Aorta (tissue), 5 donors: ENCODE measurements at regions of chr7 and their contacts with region 1.

Region 1: GRCh38 chr7:93678185-93678584 is 103.7 kb upstream of the CALCR start:
- DNase-seq: no peak
- ATAC-seq: no peak
- H3K4me3 ChIP-seq: no peak overlapping the region
- H3K27ac ChIP-seq: no peak overlapping the region
- H3K4me1 ChIP-seq: no peaks in the 10 kb centered on the region
- H3K27me3 ChIP-seq: no peaks in the 10 kb centered on the region

Region 2: DNA sequence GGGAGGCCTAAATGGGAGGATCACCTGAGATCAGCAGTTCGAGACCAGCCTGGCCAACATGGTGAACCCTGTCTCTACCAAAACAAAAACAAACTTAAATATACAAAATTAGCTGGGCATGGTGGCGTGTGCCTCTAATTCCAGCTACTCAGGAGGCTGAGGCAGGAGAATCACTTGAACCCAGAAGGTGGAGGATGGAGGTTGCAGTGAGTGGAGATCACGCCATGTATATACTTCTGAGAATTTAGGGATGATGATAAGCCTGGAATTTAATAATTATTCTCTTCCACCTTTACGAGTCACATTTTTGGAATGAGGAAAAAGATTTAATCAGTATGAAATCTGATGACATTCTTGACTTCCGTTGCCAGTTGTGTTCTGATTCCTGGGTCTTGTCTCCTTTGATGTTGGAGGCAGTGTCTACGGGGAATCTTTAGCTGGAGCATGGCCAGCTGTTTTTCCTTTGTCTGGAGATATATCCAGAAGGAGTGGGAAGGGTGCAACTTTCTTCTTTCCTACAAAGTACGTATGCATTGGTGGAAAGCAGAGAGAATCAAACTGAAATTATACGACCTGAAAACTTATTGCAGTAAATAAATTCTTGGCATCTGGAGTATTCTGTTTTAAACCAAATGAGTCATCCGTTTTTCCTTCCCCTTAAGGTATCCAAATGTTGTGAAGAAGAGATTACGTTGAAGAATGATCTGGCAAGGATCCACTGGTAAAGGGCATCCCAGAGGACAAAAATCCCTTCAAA is 236.3 kb after region 1 on chr7:
- intact Hi-C with region 1: no loop called
- DNase-seq: no peak
- ATAC-seq: no peak
- H3K4me3 ChIP-seq: no peak overlapping the region
- H3K27ac ChIP-seq: no peak overlapping the region
- H3K4me1 ChIP-seq: no peaks in the 10 kb centered on the region
- H3K27me3 ChIP-seq: no peaks in the 10 kb centered on the region

Region 3: DNA sequence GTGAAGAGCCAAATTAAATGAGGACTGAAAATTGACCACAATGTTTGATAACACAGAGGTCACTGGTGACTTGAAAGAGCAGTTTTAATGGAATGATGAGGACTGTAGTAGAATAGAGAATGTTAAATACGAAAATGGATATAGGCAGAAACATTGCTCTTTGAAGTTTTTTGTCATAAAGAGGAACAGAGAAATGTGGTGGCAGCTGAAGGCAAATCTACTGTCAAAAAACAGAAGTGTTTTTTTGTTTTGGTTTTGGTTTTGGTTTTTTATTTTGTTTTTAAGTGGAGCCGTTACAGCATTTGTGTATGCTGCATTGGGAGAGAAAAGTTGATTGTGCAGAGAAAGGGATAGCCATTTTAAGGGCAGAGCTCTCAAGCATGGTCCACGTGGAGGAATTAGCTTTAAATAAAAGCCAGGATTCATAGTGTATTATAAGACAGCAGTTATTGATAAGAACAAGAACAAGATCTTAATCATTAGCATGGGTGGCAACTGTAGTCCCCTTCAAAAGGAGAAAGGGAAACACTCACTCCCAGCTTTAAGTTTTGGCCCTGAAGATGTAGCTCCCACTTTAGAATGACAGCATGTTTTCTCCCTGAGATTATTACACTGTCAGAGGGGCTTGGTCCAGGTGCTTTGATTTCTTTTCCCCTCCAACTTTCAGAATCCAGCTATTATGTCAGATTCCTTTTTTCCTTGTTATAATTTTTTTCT is 482.7 kb after region 1 on chr7:
- intact Hi-C with region 1: no loop called
- DNase-seq: no peak
- ATAC-seq: no peak
- H3K4me3 ChIP-seq: no peak overlapping the region
- H3K27ac ChIP-seq: no peak overlapping the region
- H3K4me1 ChIP-seq: no peaks in the 10 kb centered on the region
- H3K27me3 ChIP-seq: no peaks in the 10 kb centered on the region

Region 4: DNA sequence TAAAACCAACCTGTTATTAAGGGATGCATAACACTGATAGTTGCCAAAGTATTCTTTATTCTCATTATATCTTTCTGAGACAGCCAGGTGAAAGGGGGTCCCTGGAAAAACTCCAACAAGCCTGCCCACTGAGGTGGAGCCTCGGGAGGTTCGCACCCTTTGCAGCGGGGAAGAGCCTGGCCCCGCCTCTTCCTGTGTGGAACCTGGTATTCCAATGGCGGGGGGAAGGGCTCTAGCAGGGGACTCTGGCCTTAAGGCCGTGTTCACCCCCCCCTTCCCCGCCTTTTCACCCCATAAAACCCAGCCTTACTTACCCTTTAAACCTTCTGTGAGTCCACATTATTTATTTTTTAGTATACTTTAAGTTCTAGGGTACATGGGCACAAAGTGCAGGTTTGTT is 1980.5 kb after region 1 on chr7:
- intact Hi-C with region 1: loop called in 1 of 2 experiments (anchors 5 kb)
- DNase-seq: peak in 1 of 2 donors; percentile 57
- ATAC-seq: no peak
- H3K4me3 ChIP-seq: no peak overlapping the region
- H3K27ac ChIP-seq: no peak overlapping the region
- H3K4me1 ChIP-seq: no peaks in the 10 kb centered on the region
- H3K27me3 ChIP-seq: no peaks in the 10 kb centered on the region